ENCODE measurements at regions of chr3 and their contacts with region 1.

Region 1: GRCh38 chr3:182683453-182683852 is 109.9 kb upstream of the ATP11B start:
- DNase-seq: peak; percentile 15
- H3K4me3 ChIP-seq: no peak overlapping the region
- H3K27me3 ChIP-seq: 0 out of 2 replicates have a peak, but pooled peaks cover 2% of the 10 kb centered on the region
- CTCF ChIP-seq: peak; percentile 91

Region 2: DNA sequence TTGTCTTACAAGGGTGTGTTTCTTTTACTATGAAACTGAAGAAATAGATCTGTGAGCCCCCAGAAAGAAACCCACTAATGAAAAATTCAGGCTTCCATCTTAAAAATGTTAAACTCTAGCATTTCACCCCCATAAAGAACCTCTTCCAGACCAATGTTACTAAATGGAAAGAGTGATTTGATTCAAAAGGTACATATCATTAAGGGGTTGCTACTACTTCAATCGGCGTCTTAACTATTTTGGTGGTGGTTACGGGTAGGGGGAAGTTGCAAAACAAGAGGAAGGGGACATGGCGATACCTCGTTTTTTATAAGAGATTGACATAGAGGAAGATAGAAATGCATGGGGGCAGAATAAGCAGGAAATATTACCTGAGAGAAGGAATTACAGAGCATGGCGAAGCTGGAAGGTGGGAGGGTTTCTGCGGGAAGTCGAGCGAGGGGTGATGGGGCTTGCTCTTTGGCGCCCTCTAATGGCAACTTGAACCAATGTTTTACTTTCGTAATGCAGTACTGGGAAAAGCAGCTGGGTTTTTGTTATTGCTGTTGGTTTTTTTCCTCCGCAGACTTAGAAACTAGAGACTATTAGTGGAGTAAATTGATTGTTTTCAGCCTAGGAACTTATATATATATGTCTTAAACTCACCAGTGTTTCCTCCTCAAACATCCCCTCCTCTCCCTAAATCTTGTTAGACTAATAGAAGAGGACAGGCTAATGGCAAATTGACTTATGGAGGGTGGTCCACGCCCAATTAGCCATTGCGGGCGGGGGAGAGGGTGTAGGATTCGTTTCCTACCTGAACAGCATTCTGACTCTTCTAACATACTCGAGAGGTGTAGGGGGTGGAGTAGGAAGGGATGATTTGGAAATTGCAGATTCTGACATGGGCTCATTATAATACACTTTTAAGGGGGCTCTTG is 983.0 kb before region 1 on chr3:
- CTCF ChIA-PET with region 1: interaction called, 26 read pairs
- POLR2A ChIA-PET with region 1: no interaction called
- DNase-seq: no peak
- H3K4me3 ChIP-seq: no peak overlapping the region
- H3K27me3 ChIP-seq: peaks cover 34% of the 10 kb centered on the region
- CTCF ChIP-seq: peak; percentile 85

Region 3: GRCh38 chr3:181709537-181710279 is 973.7 kb before region 1 on chr3:
- CTCF ChIA-PET with region 1: interaction called, 27 read pairs
- POLR2A ChIA-PET with region 1: no interaction called
- DNase-seq: no peak
- H3K4me3 ChIP-seq: no peak overlapping the region
- H3K27me3 ChIP-seq: peaks cover 32% of the 10 kb centered on the region
- CTCF ChIP-seq: peak; percentile 78

Region 4: DNA sequence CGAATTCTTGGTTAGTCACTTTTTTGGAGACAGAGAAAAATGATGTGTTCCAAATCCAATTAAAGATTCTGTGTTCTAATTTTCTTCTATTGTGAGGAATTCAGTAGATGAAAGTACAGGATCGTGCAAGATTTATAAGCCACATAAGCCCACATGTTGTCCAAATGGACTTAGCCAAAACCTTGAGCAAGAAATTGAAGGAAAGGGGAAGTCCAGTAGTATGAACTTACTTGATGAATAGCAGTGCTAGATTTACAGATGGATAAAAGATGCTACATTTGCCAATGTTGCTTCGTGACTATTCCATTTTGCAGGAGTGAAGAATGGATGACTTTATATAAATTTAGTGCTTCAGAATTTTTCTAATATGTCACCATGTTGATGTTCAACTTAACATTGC is 10.1 kb before region 1 on chr3:
- CTCF ChIA-PET with region 1: interaction called, 14 read pairs
- POLR2A ChIA-PET with region 1: no interaction called
- DNase-seq: no peak
- H3K4me3 ChIP-seq: no peak overlapping the region
- H3K27me3 ChIP-seq: no peaks in the 10 kb centered on the region
- CTCF ChIP-seq: no peak

Region 5: GRCh38 chr3:182713743-182714517 is 30.5 kb after region 1 on chr3:
- CTCF ChIA-PET with region 1: interaction called, 14 read pairs
- POLR2A ChIA-PET with region 1: no interaction called
- DNase-seq: peak; percentile 23
- H3K4me3 ChIP-seq: no peak overlapping the region
- H3K27me3 ChIP-seq: no peaks in the 10 kb centered on the region
- CTCF ChIP-seq: peak; percentile 58

Measured in BJ (cell line).